CD8-positive, alpha-beta memory T cell (primary cell): ENCODE measurements at regions of chr11 and their contacts with region 1.

Region 1: DNA sequence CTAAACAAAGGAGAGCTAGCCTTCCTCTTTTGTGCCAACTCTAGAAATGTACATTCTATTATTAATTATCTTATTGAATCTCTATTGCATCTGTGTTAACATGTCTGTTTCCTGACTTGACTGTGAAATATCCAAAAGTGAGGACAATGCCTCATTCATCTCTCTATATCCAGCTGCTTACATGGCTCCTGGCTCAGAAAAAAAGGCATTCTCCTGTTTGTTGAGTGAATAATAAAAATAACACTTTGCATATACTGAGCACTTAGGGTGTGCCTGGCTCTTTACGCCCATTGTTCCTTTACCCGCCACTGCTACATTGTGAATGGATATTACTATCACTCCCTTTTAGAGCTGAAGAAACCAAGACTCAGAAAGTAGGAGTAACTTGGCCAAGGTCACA is 19.9 kb downstream of the NRXN2 start:
- DNase-seq: no peak
- H3K4me3 ChIP-seq: no peak overlapping the region
- H3K4me3 Mint-ChIP-seq: no peak overlapping the region
- H3K27ac ChIP-seq: no peak overlapping the region
- H3K27ac Mint-ChIP-seq: no peak overlapping the region
- H3K4me1 ChIP-seq: no peaks in the 10 kb centered on the region
- H3K4me1 Mint-ChIP-seq: no peaks in the 10 kb centered on the region
- H3K27me3 ChIP-seq: peaks cover 4% of the 10 kb centered on the region
- H3K27me3 Mint-ChIP-seq: peaks cover 21 to 40% of the 10 kb centered on the region in 2 donors

Region 2: GRCh38 chr11:64688534-64688982 is 14.5 kb before region 1 on chr11:
- CTCF ChIA-PET with region 1: interaction called, 28 read pairs
- POLR2A ChIA-PET with region 1: no interaction called
- DNase-seq: peak; percentile 83 to 92 (median 87)
- H3K4me3 ChIP-seq: peak overlapping the region; percentile 39
- H3K4me3 Mint-ChIP-seq: peak overlapping the region in 6 of 7 donors; percentile 55 to 82 (median 66)
- H3K27ac ChIP-seq: no peak overlapping the region
- H3K27ac Mint-ChIP-seq: peak overlapping the region in 6 of 8 donors; percentile 1 to 81 (median 27)
- H3K4me1 ChIP-seq: peaks cover 9% of the 10 kb centered on the region
- H3K4me1 Mint-ChIP-seq: peaks cover 9 to 27% (median 24%) of the 10 kb centered on the region in 3 donors
- H3K27me3 ChIP-seq: peaks cover 17% of the 10 kb centered on the region
- H3K27me3 Mint-ChIP-seq: peaks cover 23 to 29% of the 10 kb centered on the region in 2 donors